Activated CD4-positive, alpha-beta T cell treated with anti-CD3 and anti-CD28 coated beads for 36 hours (primary cell): ENCODE measurements at regions of chr9 and their contacts with region 1.

Region 1: GRCh38 chr9:37994639-37995347 is 74.2 kb downstream of the SHB start:
- DNase-seq: peak; percentile 81
- ATAC-seq: peak; percentile 90
- H3K4me3 Mint-ChIP-seq: peak overlapping the region; percentile 16
- H3K27ac Mint-ChIP-seq: peak overlapping the region; percentile 74
- H3K4me1 Mint-ChIP-seq: peaks cover 18% of the 10 kb centered on the region
- H3K27me3 Mint-ChIP-seq: peaks cover 7% of the 10 kb centered on the region

Region 2: DNA sequence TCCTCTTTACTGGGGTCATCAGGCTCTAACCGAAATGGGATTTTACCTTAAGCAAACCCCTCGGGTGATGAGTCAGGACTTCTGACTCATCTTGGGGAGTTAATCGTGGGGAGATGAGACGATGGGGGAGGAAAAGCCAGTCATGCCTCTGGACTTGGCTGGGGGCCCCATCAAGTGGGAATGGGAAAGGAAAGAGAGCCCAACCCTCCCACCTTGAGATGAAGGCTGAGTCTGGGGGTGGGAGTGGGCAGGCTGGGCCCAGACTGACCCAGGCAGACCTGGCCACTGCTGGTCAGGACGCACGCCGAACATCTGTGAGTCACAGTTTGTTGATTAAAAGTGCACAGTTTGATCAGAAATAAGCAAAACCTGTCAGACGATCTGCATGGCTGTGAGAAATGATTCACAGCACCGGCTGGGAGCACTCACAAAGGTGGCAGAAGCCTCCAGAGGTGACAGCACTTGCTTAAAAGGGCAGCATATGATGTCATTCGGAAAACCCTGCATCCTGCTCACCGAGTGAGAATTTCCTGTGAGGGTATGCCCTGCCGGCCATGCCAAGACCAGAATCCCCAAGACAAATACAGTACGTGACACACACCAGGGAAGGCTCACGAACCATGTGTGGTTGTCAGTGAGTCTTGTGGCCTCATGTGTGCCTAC is 40.9 kb before region 1 on chr9:
- CTCF ChIA-PET with region 1: no interaction called
- POLR2A ChIA-PET with region 1: interaction called, 4 read pairs
- intact Hi-C with region 1: loop called in 1 of 2 experiments (anchors 5 kb)
- DNase-seq: peak; percentile 76
- ATAC-seq: peak; percentile 84
- H3K4me3 Mint-ChIP-seq: peak overlapping the region; percentile 1
- H3K27ac Mint-ChIP-seq: peak overlapping the region; percentile 70
- H3K4me1 Mint-ChIP-seq: peaks cover 31% of the 10 kb centered on the region
- H3K27me3 Mint-ChIP-seq: no peaks in the 10 kb centered on the region

Region 3: GRCh38 chr9:38017149-38017884 is 22.5 kb after region 1 on chr9:
- CTCF ChIA-PET with region 1: no interaction called
- POLR2A ChIA-PET with region 1: no interaction called
- intact Hi-C with region 1: loop called in 1 of 2 experiments (anchors 2 kb)
- DNase-seq: no peak
- ATAC-seq: no peak
- H3K4me3 Mint-ChIP-seq: no peak overlapping the region
- H3K27ac Mint-ChIP-seq: no peak overlapping the region
- H3K4me1 Mint-ChIP-seq: no peaks in the 10 kb centered on the region
- H3K27me3 Mint-ChIP-seq: no peaks in the 10 kb centered on the region